Activated CD4-positive, alpha-beta T cell treated with anti-CD3 and anti-CD28 coated beads for 36 hours (primary cell): ENCODE measurements at regions of chr17 and their contacts with region 1.

Region 1: GRCh38 chr17:8248751-8249607 is at the start of gene PFAS:
- DNase-seq: peak; percentile 98
- ATAC-seq: peak; percentile 57
- H3K4me3 Mint-ChIP-seq: peak within 1 kb of the TSS; percentile 94
- H3K27ac Mint-ChIP-seq: peak within 1 kb of the TSS; percentile 98
- H3K4me1 Mint-ChIP-seq: peaks cover 36% of the 10 kb centered on the region
- H3K27me3 Mint-ChIP-seq: no peaks in the 10 kb centered on the region
- total RNA-seq, gene PFAS: 113 to 141 TPM

Region 2: GRCh38 chr17:7239091-7240027 is 1009.6 kb before region 1 on chr17 and contains the start of gene PHF23:
- CTCF ChIA-PET with region 1: no interaction called
- POLR2A ChIA-PET with region 1: no interaction called
- intact Hi-C with region 1: loop called in 1 of 2 experiments (anchors 2 kb)
- DNase-seq: peak; percentile 99
- ATAC-seq: peak; percentile 74
- H3K4me3 Mint-ChIP-seq: peak within 1 kb of the TSS; percentile 97
- H3K27ac Mint-ChIP-seq: peak within 1 kb of the TSS; percentile 93
- H3K4me1 Mint-ChIP-seq: peaks cover 61% of the 10 kb centered on the region
- H3K27me3 Mint-ChIP-seq: no peaks in the 10 kb centered on the region
- total RNA-seq, gene PHF23: 23.6 to 35.2 TPM

Region 3: GRCh38 chr17:8138672-8139371 is 110.2 kb before region 1 on chr17:
- CTCF ChIA-PET with region 1: interaction called, 10 read pairs
- POLR2A ChIA-PET with region 1: no interaction called
- intact Hi-C with region 1: loop called in 1 of 2 experiments (anchors 1 kb)
- DNase-seq: peak; percentile 98
- ATAC-seq: peak; percentile 90
- H3K4me3 Mint-ChIP-seq: no peak overlapping the region
- H3K27ac Mint-ChIP-seq: no peak overlapping the region
- H3K4me1 Mint-ChIP-seq: no peaks in the 10 kb centered on the region
- H3K27me3 Mint-ChIP-seq: no peaks in the 10 kb centered on the region

Region 4: GRCh38 chr17:8173056-8173870 is 75.7 kb before region 1 on chr17:
- CTCF ChIA-PET with region 1: no interaction called
- POLR2A ChIA-PET with region 1: interaction called, 24 read pairs
- intact Hi-C with region 1: loop called in 1 of 2 experiments (anchors 1 kb)
- DNase-seq: peak; percentile 91
- ATAC-seq: peak; percentile 87
- H3K4me3 Mint-ChIP-seq: peak overlapping the region; percentile 78
- H3K27ac Mint-ChIP-seq: peak overlapping the region; percentile 96
- H3K4me1 Mint-ChIP-seq: peaks cover 40% of the 10 kb centered on the region
- H3K27me3 Mint-ChIP-seq: no peaks in the 10 kb centered on the region

Region 5: DNA sequence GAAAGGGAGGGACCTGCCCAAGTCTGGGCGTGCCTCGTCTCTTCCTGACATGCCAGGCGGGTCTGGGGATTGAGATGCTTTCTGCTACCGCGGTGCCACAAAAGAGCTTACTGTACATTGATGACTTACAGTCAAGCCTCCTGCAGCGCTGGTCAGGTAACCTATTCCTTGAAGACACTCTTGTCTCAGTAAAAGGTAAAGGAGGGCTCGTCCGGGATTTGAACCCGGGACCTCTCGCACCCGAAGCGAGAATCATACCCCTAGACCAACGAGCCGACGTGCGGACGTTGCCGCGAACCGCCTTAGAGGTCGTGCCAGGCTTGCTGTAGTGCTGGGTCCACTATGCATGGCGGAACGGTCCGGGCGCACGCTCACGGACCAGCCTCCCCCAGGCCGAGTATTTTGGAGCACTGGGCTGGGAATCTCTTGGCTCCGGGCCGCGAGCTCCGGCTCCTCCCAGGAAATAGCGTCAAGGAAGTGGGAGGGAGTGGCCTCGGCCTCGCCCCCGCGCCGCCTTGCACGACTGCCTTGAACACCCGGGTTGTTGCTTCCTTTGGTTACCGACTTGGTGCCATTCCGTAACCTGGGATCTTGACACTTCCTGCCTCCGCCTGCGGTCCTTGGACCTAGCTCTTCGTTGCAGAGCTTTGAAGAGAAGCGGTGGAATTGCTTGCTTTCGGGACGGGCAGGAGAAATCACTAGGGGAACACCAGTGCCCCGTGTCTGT is 26.2 kb before region 1 on chr17:
- CTCF ChIA-PET with region 1: interaction called, 11 read pairs
- POLR2A ChIA-PET with region 1: interaction called, 40 read pairs
- intact Hi-C with region 1: loop called (anchors 1 kb)
- DNase-seq: peak; percentile 94
- ATAC-seq: peak; percentile 35
- H3K4me3 Mint-ChIP-seq: peak overlapping the region; percentile 98
- H3K27ac Mint-ChIP-seq: peak overlapping the region; percentile 98
- H3K4me1 Mint-ChIP-seq: peaks cover 54% of the 10 kb centered on the region
- H3K27me3 Mint-ChIP-seq: no peaks in the 10 kb centered on the region

Region 6: DNA sequence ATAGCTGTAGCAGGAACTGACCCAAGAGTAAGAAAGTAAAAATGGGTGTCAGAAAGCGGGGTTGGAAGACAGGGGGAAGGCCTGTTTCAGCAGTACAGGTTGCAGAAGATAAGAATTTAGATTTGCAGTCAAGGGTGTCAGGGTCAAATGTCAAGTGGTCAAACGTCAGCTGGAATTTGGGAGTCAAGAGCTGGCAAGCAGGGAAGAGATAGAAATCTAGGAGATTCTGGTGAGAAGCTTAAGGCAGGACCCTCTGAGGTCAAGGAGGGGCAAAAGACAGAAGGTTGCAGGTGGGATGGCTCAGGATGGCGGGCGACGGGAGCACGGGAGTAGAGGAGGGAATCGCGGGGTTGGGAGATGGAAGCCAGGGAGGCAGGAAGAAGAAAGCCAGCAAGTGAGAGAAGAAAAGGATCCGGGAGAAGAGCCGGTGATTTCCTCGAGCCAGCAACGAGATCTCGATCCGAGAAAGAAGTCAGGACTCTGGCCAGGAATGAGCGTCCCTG is 45.9 kb after region 1 on chr17:
- CTCF ChIA-PET with region 1: interaction called, 3 read pairs
- POLR2A ChIA-PET with region 1: interaction called, 22 read pairs
- intact Hi-C with region 1: loop called in 1 of 2 experiments (anchors 1 kb)
- DNase-seq: no peak
- ATAC-seq: no peak
- H3K4me3 Mint-ChIP-seq: peak overlapping the region; percentile 76
- H3K27ac Mint-ChIP-seq: peak overlapping the region; percentile 90
- H3K4me1 Mint-ChIP-seq: peaks cover 17% of the 10 kb centered on the region
- H3K27me3 Mint-ChIP-seq: no peaks in the 10 kb centered on the region

Region 7: GRCh38 chr17:8311131-8311790 is 62.3 kb after region 1 on chr17:
- CTCF ChIA-PET with region 1: no interaction called
- POLR2A ChIA-PET with region 1: no interaction called
- intact Hi-C with region 1: no loop called
- DNase-seq: no peak
- ATAC-seq: no peak
- H3K4me3 Mint-ChIP-seq: no peak overlapping the region
- H3K27ac Mint-ChIP-seq: no peak overlapping the region
- H3K4me1 Mint-ChIP-seq: no peaks in the 10 kb centered on the region
- H3K27me3 Mint-ChIP-seq: peaks cover 11% of the 10 kb centered on the region

Region 8: GRCh38 chr17:8435245-8436168 is 186.5 kb after region 1 on chr17 and contains the start of gene NDEL1:
- CTCF ChIA-PET with region 1: no interaction called
- POLR2A ChIA-PET with region 1: no interaction called
- intact Hi-C with region 1: loop called in 1 of 2 experiments (anchors 2 kb)
- DNase-seq: peak; percentile 100
- ATAC-seq: peak; percentile 98
- H3K4me3 Mint-ChIP-seq: peak within 1 kb of the TSS; percentile 87
- H3K27ac Mint-ChIP-seq: peak within 1 kb of the TSS; percentile 91
- H3K4me1 Mint-ChIP-seq: peaks cover 29% of the 10 kb centered on the region
- H3K27me3 Mint-ChIP-seq: no peaks in the 10 kb centered on the region
- total RNA-seq, gene NDEL1: 51.9 to 58.6 TPM